Common myeloid progenitor, CD34-positive (primary cell): ENCODE measurements at regions of chr4 and their contacts with region 1.

Region 1: DNA sequence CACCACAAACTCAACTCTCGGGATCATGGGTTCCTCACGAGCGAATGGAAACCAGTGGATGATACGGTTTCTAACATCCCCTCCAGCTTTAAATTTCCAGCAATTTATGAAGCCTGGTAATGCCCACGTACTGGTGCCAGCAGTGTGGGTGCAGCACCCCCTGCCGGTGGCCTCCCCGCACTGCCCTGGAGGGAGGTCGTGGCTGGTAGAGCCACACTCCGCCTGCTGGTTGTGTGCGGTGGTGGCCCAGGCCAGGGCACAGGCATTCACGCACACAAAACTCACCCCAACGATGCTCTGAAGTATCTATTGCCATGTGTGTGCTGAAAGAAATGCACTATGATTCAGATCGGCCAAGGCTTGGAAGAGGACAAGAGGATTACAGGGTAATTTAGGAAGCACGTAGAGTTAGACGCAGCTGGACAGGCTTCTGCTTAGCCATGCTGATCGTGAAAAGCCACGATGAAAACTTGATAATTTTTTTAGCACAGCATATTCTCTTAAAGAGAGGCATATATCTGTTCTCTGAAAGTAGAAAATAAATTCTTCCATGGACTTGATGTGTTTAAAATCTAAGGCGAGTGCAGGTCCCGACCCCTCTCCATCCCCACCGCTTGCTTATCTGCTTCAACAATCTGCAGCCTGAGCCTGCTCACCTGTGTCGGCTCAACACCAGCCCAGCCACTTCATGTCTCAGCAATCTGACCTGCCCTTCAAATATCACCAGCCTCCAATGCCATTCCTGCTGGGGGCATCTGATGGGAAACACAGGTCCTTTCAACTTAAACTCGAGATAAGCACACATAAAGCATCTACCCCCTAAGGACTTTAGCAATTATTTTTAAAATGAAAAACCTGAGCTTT is 59.0 kb downstream of the SCD5 start:
- DNase-seq: peak; percentile 71 to 88 (median 84)
- H3K4me3 ChIP-seq: no peak overlapping the region
- H3K27ac ChIP-seq: no peak overlapping the region
- H3K4me1 ChIP-seq: no peaks in the 10 kb centered on the region
- H3K27me3 ChIP-seq: no peaks in the 10 kb centered on the region

Region 2: DNA sequence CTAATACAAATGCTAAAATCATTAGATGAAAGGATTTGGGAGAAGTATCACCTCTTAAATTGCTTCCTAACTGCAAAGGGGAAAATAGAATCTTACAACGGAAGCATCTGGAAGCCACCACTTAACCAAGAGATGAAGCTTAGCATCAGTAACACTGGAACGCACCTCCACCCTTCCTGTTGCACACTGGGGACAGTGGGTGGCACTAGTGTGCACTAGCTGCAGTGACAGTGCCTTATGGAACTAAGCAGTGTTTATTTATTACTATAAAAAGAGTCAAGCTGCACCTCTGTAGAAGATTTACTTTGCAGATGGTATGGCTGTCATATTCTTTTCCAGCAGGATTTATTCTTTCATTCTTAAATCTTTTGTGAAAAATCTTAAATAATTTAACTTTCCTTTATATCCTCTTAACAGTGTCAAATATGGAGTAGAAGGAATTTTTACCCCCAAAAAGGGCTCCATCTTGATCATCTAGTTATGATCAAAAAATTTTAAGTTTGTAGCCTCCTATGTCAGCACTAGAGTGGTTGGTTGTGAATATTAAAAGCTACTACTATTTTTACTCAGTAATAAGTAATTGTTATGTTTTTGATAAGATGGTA is 17.6 kb before region 1 on chr4:
- CTCF ChIA-PET with region 1: interaction called, 33 read pairs
- POLR2A ChIA-PET with region 1: no interaction called
- DNase-seq: peak; percentile 31 to 72 (median 55)
- H3K4me3 ChIP-seq: no peak overlapping the region
- H3K27ac ChIP-seq: no peak overlapping the region
- H3K4me1 ChIP-seq: no peaks in the 10 kb centered on the region
- H3K27me3 ChIP-seq: no peaks in the 10 kb centered on the region

Region 3: GRCh38 chr4:82865592-82865991 is 126.0 kb after region 1 on chr4:
- CTCF ChIA-PET with region 1: no interaction called
- POLR2A ChIA-PET with region 1: no interaction called
- DNase-seq: peak; percentile 54 to 87 (median 82)
- H3K4me3 ChIP-seq: peak overlapping the region in 1 of 7 experiments; percentile 28
- H3K27ac ChIP-seq: no peak overlapping the region
- H3K4me1 ChIP-seq: peaks cover 0 to 7% (median 5%) of the 10 kb centered on the region in 4 experiments
- H3K27me3 ChIP-seq: no peaks in the 10 kb centered on the region